ENCODE measurements at regions of chr18 and their contacts with region 1.

Region 1: DNA sequence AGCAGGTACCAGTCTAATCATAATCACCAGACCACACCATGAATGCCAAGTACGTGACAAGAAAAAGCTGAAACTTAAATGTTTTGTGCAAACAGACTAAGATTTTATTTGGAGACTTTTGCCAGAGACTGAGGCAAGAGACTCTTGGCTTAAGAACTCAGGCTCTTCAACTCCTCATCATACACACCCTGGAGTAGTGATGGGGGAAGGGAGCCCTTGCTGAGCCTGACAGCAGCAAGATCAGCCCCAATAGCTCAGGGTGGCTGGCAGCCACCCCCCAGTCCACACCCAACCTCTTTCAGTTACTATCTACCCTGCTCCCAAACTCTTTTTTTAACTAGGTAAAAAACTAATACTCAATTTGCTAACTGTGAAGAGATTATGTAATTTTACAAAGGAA is 114.8 kb downstream of the CCBE1 start:
- DNase-seq: no peak
- ATAC-seq: no peak
- H3K4me3 ChIP-seq: no peak overlapping the region
- H3K27ac ChIP-seq: no peak overlapping the region
- H3K4me1 ChIP-seq: no peaks in the 10 kb centered on the region
- H3K27me3 ChIP-seq: peaks cover 64% of the 10 kb centered on the region
- CTCF ChIP-seq: no peak
- POLR2A ChIP-seq: no peak
- RAD21 ChIP-seq: no peak

Region 2: GRCh38 chr18:59536166-59536565 is 46.2 kb before region 1 on chr18:
- CTCF ChIA-PET with region 1: no interaction called
- POLR2A ChIA-PET with region 1: no interaction called
- RAD21 ChIA-PET with region 1: no interaction called
- intact Hi-C with region 1: loop called (anchors 5 kb)
- DNase-seq: no peak
- ATAC-seq: no peak
- H3K4me3 ChIP-seq: no peak overlapping the region
- H3K27ac ChIP-seq: no peak overlapping the region
- H3K4me1 ChIP-seq: no peaks in the 10 kb centered on the region
- H3K27me3 ChIP-seq: peaks cover 57% of the 10 kb centered on the region
- CTCF ChIP-seq: no peak
- POLR2A ChIP-seq: no peak
- RAD21 ChIP-seq: no peak

Region 3: DNA sequence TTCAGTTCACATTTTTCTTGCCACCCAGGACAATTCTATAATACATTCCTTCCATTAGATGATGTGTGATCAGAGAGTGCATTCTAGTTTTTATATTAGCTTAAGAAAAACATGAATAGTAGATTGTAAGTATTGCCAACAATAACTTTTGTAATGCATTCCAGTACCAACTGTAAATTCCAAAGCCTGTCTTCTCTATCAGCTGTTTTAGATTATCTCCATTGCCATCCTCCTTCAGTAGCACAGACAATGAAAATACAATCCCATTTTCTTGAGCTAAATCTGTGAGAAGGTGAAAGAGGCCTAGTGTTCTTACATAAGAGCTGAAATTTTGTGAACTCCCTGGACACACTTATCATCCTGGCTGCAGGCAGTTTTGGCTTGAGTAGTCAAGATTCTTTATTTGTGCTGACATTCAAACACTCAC is 10.9 kb after region 1 on chr18:
- CTCF ChIA-PET with region 1: no interaction called
- POLR2A ChIA-PET with region 1: no interaction called
- RAD21 ChIA-PET with region 1: no interaction called
- intact Hi-C with region 1: no loop called
- DNase-seq: no peak
- ATAC-seq: no peak
- H3K4me3 ChIP-seq: no peak overlapping the region
- H3K27ac ChIP-seq: no peak overlapping the region
- H3K4me1 ChIP-seq: no peaks in the 10 kb centered on the region; a peak in 1 of 4 replicates
- H3K27me3 ChIP-seq: peaks cover 46% of the 10 kb centered on the region
- CTCF ChIP-seq: no peak
- POLR2A ChIP-seq: no peak
- RAD21 ChIP-seq: no peak

Measured in HCT116 (cell line).